HEK293 (cell line): ENCODE measurements at regions of chr10 and their contacts with region 1.

Region 1: GRCh38 chr10:67779465-67780203 is 58.4 kb downstream of the DNAJC12 start:
- H3K4me3 ChIP-seq: no peak overlapping the region
- H3K27ac ChIP-seq: no peak overlapping the region
- H3K4me1 ChIP-seq: no peaks in the 10 kb centered on the region
- CTCF ChIP-seq: peak; percentile 55

Region 2: GRCh38 chr10:67666416-67667034 is 113.1 kb before region 1 on chr10:
- CTCF ChIA-PET with region 1: interaction called, 75 read pairs
- POLR2A ChIA-PET with region 1: no interaction called
- H3K4me3 ChIP-seq: no peak overlapping the region
- H3K27ac ChIP-seq: no peak overlapping the region
- H3K4me1 ChIP-seq: no peaks in the 10 kb centered on the region
- CTCF ChIP-seq: no peak

Region 3: DNA sequence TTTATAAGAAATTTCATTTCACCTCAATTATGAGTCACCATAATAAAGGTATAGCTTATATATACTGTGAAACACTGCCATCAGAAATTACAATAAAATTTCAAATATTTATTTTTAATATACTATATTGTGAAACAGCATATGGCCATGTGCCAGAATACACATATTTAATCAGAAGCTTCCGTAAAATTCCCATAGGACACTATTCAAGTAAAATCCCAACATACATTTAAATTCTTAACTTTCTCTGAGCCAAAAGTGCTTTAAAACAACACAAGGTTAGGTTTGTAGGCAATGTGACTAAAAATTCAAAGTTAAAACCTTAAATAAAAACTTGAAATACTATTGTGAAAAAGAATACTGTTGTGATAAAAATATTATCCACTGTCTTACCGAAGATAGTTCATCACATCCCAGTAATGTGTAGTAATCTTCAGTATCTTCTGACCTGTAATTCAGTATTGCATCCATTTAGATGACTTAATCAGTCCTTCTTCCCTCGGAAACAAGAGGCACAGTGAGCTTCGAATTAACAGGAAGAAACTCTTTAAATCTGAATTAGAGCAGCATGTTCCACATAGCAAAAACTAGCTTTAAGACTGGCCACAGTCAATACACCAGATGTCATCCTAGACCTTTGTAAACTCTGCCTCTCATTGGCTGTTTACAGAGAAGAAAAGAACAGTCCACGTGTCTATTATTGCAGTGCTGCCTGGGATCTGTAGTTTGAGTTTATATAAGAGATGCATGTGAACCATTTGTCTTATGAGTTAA is 58.1 kb after region 1 on chr10 and contains the start of gene DNAJC12:
- CTCF ChIA-PET with region 1: interaction called, 4 read pairs
- POLR2A ChIA-PET with region 1: interaction called, 10 read pairs
- H3K4me3 ChIP-seq: peak within 1 kb of the TSS; percentile 53
- H3K27ac ChIP-seq: no peak within 1 kb of the TSS
- H3K4me1 ChIP-seq: 0 out of 2 replicates have a peak, but pooled peaks cover 2% of the 10 kb centered on the region
- CTCF ChIP-seq: no peak

Region 4: GRCh38 chr10:67875340-67876238 is 96.0 kb after region 1 on chr10:
- CTCF ChIA-PET with region 1: no interaction called
- POLR2A ChIA-PET with region 1: no interaction called
- H3K4me3 ChIP-seq: no peak overlapping the region
- H3K27ac ChIP-seq: no peak overlapping the region
- H3K4me1 ChIP-seq: no peaks in the 10 kb centered on the region
- CTCF ChIP-seq: no peak